Activated naive CD4-positive, alpha-beta T cell treated with anti-CD3 and anti-CD28 coated beads for 36 hours (primary cell): ENCODE measurements at regions of chrX and their contacts with region 1.

Region 1: DNA sequence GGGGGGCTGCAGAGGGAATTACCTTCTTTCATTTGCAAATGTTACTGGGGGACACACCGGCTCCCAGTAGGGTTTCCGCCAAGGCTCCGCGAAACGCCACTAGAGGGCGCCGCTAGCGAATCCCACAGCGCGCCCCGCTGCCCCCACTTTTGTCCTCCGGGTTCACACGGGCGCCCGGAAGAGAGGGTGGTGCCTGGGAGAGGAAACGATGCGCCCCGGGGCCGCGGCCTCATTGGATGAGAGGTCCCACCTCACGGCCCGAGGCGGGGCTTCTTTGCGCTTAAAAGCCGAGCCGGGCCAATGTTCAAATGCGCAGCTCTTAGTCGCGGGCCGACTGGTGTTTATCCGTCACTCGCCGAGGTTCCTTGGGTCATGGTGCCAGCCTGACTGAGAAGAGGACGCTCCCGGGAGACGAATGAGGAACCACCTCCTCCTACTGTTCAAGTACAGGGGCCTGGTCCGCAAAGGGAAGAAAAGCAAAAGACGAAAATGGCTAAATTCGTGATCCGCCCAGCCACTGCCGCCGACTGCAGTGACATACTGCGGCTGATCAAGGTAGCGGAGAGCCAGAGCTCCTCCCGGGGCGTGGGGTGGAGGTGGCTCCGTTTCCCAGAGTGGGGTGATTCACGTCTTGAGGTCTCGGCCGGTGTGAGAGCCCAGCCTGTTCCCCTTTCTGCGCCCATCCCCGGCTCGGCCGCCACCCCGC is at the start of gene SAT1:
- DNase-seq: peak; percentile 96
- H3K4me3 Mint-ChIP-seq: peak within 1 kb of the TSS; percentile 84
- H3K27ac Mint-ChIP-seq: peak within 1 kb of the TSS; percentile 95
- H3K4me1 Mint-ChIP-seq: peaks cover 29% of the 10 kb centered on the region
- H3K27me3 Mint-ChIP-seq: no peaks in the 10 kb centered on the region
- total RNA-seq, gene SAT1: 629 to 649 TPM

Region 2: GRCh38 chrX:23610495-23610894 is 172.5 kb before region 1 on chrX:
- CTCF ChIA-PET with region 1: no interaction called
- intact Hi-C with region 1: no loop called
- DNase-seq: no peak
- H3K4me3 Mint-ChIP-seq: no peak overlapping the region
- H3K27ac Mint-ChIP-seq: no peak overlapping the region
- H3K4me1 Mint-ChIP-seq: no peaks in the 10 kb centered on the region
- H3K27me3 Mint-ChIP-seq: no peaks in the 10 kb centered on the region

Region 3: GRCh38 chrX:23732704-23733103 is 50.3 kb before region 1 on chrX:
- CTCF ChIA-PET with region 1: interaction called, 7 read pairs
- intact Hi-C with region 1: loop called (anchors 1 kb)
- DNase-seq: peak; percentile 8
- H3K4me3 Mint-ChIP-seq: peak overlapping the region; percentile 55
- H3K27ac Mint-ChIP-seq: peak overlapping the region; percentile 88
- H3K4me1 Mint-ChIP-seq: peaks cover 41% of the 10 kb centered on the region
- H3K27me3 Mint-ChIP-seq: no peaks in the 10 kb centered on the region

Region 4: GRCh38 chrX:23901805-23902204 is 118.8 kb after region 1 on chrX:
- CTCF ChIA-PET with region 1: interaction called, 58 read pairs
- intact Hi-C with region 1: loop called (anchors 1 kb)
- DNase-seq: peak; percentile 61
- H3K4me3 Mint-ChIP-seq: no peak overlapping the region
- H3K27ac Mint-ChIP-seq: no peak overlapping the region
- H3K4me1 Mint-ChIP-seq: peaks cover 11% of the 10 kb centered on the region
- H3K27me3 Mint-ChIP-seq: no peaks in the 10 kb centered on the region

Region 5: DNA sequence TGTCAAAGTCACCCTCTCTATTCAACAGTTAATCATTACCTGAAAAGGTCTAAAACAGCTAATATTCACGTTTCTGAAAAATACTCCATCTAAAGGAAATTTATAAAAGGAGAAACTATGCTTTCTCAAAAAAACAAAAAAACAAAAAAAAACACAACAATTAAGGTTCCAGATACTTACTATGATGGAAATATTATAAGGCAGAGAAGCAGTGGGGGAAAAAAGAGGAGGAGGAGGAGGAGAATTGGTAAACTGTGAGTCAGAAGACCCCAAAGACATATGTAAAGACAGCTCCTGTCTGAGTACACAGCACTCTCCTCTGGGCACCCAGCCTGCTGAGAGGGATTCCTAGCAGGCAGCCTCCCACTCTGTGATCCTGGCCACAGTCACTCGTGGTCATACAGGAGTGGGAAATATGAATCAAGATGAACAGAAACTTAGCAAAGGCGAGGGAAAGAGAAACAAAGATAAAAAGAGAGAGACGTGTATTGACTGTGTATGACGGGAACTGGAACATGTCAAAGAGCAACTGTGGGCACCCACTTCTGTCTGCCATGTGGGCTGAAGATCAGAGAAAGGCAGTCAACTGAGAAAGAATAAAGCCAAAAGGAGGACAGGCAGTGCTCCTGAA is 231.5 kb after region 1 on chrX:
- CTCF ChIA-PET with region 1: no interaction called
- intact Hi-C with region 1: loop called (anchors 5 kb)
- DNase-seq: peak; percentile 76
- H3K4me3 Mint-ChIP-seq: peak overlapping the region; percentile 67
- H3K27ac Mint-ChIP-seq: peak overlapping the region; percentile 92
- H3K4me1 Mint-ChIP-seq: peaks cover 37% of the 10 kb centered on the region
- H3K27me3 Mint-ChIP-seq: no peaks in the 10 kb centered on the region

Region 6: GRCh38 chrX:24150051-24150790 is 367.2 kb after region 1 on chrX:
- CTCF ChIA-PET with region 1: no interaction called
- intact Hi-C with region 1: loop called (anchors 1 kb)
- DNase-seq: peak; percentile 89
- H3K4me3 Mint-ChIP-seq: peak overlapping the region; percentile 80
- H3K27ac Mint-ChIP-seq: peak overlapping the region; percentile 89
- H3K4me1 Mint-ChIP-seq: peaks cover 56% of the 10 kb centered on the region
- H3K27me3 Mint-ChIP-seq: no peaks in the 10 kb centered on the region